CD4-positive, alpha-beta T cell (primary cell): ENCODE measurements at regions of chr16 and their contacts with region 1.

Region 1: DNA sequence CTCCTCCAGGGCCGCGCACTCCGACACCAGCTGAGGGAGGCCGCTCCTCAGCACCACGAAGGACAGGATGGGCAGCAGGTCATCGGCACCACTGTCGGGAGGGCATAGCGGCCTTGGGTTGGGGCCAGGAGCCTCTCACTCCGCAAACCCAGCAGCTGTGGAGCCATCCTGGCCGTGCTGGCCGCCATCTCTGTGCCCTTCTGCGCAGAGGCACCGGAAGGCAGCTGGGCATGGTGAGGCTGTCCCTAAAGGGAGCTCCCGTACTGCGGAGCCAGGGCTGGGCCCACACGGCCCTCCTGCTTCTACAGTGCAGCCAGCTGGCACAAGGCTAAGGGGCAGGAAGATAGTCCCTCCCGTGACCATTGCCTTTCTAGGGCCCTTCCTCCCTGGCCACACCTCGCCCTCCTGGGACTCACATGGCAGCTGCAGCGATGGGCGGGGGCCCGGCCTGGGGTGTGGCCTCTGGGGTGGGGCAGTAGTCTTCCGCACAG is 7.0 kb upstream of the SPATA2L start:
- DNase-seq: no peak
- ATAC-seq: no peak
- H3K4me3 ChIP-seq: no peak overlapping the region
- H3K4me3 Mint-ChIP-seq: no peak overlapping the region
- H3K27ac ChIP-seq: no peak overlapping the region
- H3K27ac Mint-ChIP-seq: no peak overlapping the region
- H3K4me1 ChIP-seq: peaks cover 31% of the 10 kb centered on the region
- H3K4me1 Mint-ChIP-seq: peaks cover 6% of the 10 kb centered on the region
- H3K27me3 ChIP-seq: peaks cover 0 to 2% of the 10 kb centered on the region in 2 experiments
- H3K27me3 Mint-ChIP-seq: no peaks in the 10 kb centered on the region
- CTCF ChIP-seq: no peak

Region 2: DNA sequence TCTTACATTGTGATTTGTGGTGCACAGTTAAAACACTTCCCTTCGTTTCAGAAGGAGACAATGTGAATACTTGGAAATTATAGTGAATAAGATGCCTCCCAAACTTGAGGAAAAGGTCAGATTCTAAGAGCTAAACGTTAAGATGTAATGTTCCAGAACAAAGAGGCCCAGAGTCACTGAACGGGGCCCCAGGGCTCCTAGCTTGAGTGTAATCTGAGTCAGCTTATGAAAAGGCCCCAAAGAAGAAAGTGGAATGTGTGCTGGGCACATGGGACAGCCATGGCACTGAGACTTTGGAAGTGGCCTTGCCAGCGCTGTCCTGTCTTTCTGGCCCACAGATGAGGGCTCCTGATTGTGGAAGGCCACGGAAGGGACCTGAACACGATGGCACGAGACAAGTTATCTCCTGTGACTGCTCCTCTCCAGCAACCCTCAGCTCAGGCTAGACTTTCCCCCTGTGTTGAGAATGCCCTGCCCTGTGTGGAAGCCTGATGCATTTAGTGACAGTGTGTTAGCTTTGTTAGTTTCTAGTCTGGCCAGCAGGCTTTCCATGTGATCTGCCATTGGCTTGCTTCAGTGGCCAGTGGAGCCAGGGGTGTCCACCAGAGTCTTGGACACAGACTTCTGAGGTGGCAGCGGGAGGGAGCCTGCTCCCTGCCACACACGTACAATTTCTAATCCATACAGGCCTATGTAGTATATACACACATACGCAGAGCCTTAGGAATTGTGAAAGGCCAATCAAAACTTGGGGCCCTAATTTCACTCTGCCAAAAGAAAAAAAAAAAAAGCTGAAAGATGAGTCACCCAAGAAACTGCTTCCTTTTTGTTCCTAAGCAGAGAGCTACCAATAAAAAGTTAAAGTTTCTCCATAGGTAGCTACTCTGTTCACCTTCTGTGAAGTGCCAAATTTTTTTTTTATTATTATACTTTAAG is 37.7 kb before region 1 on chr16:
- CTCF ChIA-PET with region 1: no interaction called
- POLR2A ChIA-PET with region 1: no interaction called
- intact Hi-C with region 1: no loop called
- DNase-seq: no peak
- ATAC-seq: no peak
- H3K4me3 ChIP-seq: no peak overlapping the region
- H3K4me3 Mint-ChIP-seq: no peak overlapping the region
- H3K27ac ChIP-seq: no peak overlapping the region
- H3K27ac Mint-ChIP-seq: no peak overlapping the region
- H3K4me1 ChIP-seq: peaks cover 5% of the 10 kb centered on the region
- H3K4me1 Mint-ChIP-seq: peaks cover 6% of the 10 kb centered on the region
- H3K27me3 ChIP-seq: no peaks in the 10 kb centered on the region
- H3K27me3 Mint-ChIP-seq: no peaks in the 10 kb centered on the region
- CTCF ChIP-seq: no peak

Region 3: DNA sequence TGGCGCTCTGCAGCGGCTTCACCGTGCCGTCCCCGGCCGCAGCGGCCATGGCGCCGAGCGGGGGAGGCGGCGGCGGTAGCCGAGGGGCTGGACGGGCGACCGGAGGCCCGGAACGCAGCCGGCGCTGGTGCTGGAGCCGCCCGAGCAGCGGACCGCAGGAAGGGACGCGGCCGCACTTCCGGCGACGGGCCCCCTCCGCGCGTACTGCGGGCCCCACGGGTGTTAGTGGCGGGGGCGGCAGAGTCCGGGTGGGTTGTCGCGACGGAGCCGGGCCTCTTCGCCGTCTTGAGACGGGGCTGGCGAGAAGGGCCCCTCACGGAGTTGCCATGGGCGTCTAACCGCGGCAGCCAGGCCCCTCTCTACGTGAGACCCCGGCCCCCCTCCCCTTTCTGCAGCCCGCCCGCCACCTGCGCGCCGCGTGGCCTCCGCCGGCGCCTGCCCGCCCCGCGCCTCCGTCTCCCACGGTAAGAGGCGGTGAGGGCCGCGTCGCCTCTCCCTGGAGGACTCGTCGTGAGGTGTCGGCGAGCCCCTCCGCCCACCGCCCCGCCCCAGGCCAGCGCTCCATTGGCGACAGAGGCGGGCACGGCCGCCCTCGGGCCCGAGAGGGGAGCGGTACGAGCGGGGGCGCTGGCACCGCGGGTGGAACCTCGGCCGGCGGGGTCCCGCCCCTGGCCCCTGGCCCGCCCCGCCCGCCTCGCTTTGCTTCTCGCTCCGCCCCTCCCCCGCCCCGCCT is 12.5 kb after region 1 on chr16 and contains the starts of genes VPS9D1 and ZNF276:
- CTCF ChIA-PET with region 1: interaction called, 9 read pairs
- POLR2A ChIA-PET with region 1: interaction called, 11 read pairs
- intact Hi-C with region 1: loop called in 1 of 2 experiments (anchors 1 kb)
- DNase-seq: peak; percentile 73 to 93 (median 85)
- ATAC-seq: peak; percentile 43
- H3K4me3 ChIP-seq: peak within 1 kb of the TSS; percentile 87
- H3K4me3 Mint-ChIP-seq: peak within 1 kb of the TSS; percentile 99
- H3K27ac ChIP-seq: peak within 1 kb of the TSS; percentile 69 to 94
- H3K27ac Mint-ChIP-seq: peak within 1 kb of the TSS; percentile 98
- H3K4me1 ChIP-seq: peaks cover 57% of the 10 kb centered on the region
- H3K4me1 Mint-ChIP-seq: peaks cover 32% of the 10 kb centered on the region
- H3K27me3 ChIP-seq: no peaks in the 10 kb centered on the region
- H3K27me3 Mint-ChIP-seq: no peaks in the 10 kb centered on the region
- CTCF ChIP-seq: no peak
- total RNA-seq, gene VPS9D1: 18.5 to 21.8 TPM
- total RNA-seq, gene ZNF276: 127 to 137 TPM

Region 4: GRCh38 chr16:89761304-89761922 is 52.9 kb after region 1 on chr16:
- CTCF ChIA-PET with region 1: interaction called, 10 read pairs
- POLR2A ChIA-PET with region 1: interaction called, 8 read pairs
- intact Hi-C with region 1: no loop called
- DNase-seq: peak in 4 of 14 experiments; percentile 41 to 66 (median 49)
- ATAC-seq: peak; percentile 68
- H3K4me3 ChIP-seq: peak overlapping the region; percentile 48
- H3K4me3 Mint-ChIP-seq: peak overlapping the region; percentile 87
- H3K27ac ChIP-seq: peak overlapping the region in 1 of 2 donors; percentile 24
- H3K27ac Mint-ChIP-seq: peak overlapping the region; percentile 88
- H3K4me1 ChIP-seq: peaks cover 65% of the 10 kb centered on the region
- H3K4me1 Mint-ChIP-seq: peaks cover 29% of the 10 kb centered on the region
- H3K27me3 ChIP-seq: no peaks in the 10 kb centered on the region
- H3K27me3 Mint-ChIP-seq: no peaks in the 10 kb centered on the region
- CTCF ChIP-seq: no peak

Region 5: DNA sequence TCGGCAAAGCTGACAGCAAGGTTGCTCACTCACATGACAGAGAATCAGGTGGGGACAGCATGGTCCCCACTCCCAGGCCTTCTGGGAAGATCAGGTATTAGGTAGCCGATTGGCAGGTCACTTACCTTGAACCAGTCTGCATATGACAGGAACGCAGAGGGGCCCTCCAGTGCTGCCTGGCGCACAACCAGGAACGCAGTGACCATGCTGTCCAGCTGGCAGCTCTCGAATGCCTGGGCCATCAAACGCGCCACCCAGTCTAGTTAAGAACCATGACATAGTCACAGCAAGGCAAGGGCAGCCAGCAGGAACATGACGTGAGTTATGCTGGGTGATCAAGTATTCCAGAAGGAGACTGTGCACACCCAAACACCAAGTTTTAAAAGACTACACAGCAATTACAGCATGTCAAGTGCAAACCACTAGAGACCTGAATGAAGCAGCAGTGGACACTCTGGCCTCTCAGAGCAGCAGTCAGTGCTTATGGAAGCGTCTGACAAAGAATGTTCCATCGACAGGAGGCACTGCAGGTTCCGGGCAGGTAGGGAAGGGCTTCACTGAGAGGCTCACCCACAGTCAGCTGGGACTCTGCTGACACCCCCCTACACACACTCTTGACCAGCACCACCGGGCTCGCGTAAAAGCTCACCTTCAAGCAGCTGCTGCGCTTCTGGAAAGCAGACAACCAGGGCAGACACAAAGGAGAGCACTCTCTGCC is 83.0 kb after region 1 on chr16:
- CTCF ChIA-PET with region 1: interaction called, 44 read pairs
- POLR2A ChIA-PET with region 1: interaction called, 7 read pairs
- intact Hi-C with region 1: loop called (anchors 1 kb)
- DNase-seq: no peak
- ATAC-seq: no peak
- H3K4me3 ChIP-seq: no peak overlapping the region
- H3K4me3 Mint-ChIP-seq: no peak overlapping the region
- H3K27ac ChIP-seq: no peak overlapping the region
- H3K27ac Mint-ChIP-seq: no peak overlapping the region
- H3K4me1 ChIP-seq: peaks cover 14% of the 10 kb centered on the region
- H3K4me1 Mint-ChIP-seq: peaks cover 15% of the 10 kb centered on the region
- H3K27me3 ChIP-seq: no peaks in the 10 kb centered on the region
- H3K27me3 Mint-ChIP-seq: no peaks in the 10 kb centered on the region
- CTCF ChIP-seq: no peak

Region 6: GRCh38 chr16:89909777-89910716 is 201.6 kb after region 1 on chr16:
- CTCF ChIA-PET with region 1: interaction called, 4 read pairs
- POLR2A ChIA-PET with region 1: interaction called, 6 read pairs
- intact Hi-C with region 1: loop called (anchors 1 kb)
- DNase-seq: peak; percentile 51 to 84 (median 64)
- ATAC-seq: peak; percentile 85
- H3K4me3 ChIP-seq: no peak overlapping the region
- H3K4me3 Mint-ChIP-seq: no peak overlapping the region
- H3K27ac ChIP-seq: no peak overlapping the region
- H3K27ac Mint-ChIP-seq: no peak overlapping the region
- H3K4me1 ChIP-seq: peaks cover 11% of the 10 kb centered on the region
- H3K4me1 Mint-ChIP-seq: peaks cover 3% of the 10 kb centered on the region
- H3K27me3 ChIP-seq: no peaks in the 10 kb centered on the region
- H3K27me3 Mint-ChIP-seq: no peaks in the 10 kb centered on the region
- CTCF ChIP-seq: peak; percentile 83